ENCODE measurements at regions of chr19 and their contacts with region 1.

Region 1: DNA sequence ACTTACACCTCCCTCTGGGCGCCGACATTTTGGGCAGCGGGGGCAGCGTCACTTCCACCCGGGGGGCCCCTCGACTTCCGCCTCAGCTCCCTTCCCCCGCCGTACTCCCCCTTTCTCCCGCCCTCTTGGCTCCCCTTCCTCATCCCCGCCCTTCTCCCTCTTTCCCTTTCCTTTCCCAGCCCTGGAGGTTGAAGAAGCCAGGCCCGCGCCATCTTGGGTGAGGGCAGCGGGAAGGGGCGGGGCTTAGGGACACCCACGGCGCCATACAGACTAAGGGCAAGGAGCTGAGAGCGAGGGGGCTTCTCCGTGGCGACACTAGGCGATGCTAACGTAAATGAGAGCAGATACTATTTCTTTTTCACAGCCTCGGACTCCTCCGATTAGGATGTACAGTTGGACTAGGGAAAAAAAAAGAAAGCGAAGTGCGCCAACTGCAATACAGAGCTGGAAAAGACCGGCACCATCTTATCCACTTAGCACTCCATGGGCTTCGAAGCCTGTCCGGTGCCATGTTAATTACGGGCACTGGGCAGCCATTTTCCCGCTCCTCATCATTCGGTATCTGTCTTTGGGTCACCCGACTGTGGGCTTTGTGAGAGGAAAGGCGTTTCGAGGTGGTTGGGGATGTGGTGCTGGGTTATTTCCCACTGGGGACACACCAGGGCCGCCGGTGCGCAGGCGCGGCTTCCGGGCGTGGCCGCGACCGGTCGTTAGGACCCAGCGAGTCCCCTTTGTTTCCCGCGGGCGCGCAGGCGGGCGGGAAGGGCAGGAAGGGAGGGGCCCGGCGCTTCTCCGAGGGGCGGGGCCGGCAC is at the start of gene FIZ1:
- DNase-seq: peak; percentile 98
- ATAC-seq: peak; percentile 79
- H3K4me3 Mint-ChIP-seq: peak within 1 kb of the TSS; percentile 89
- H3K27ac Mint-ChIP-seq: peak within 1 kb of the TSS; percentile 99
- H3K4me1 Mint-ChIP-seq: peaks cover 31% of the 10 kb centered on the region
- H3K27me3 Mint-ChIP-seq: no peaks in the 10 kb centered on the region
- total RNA-seq, gene FIZ1: 13.6 to 14.7 TPM

Region 2: GRCh38 chr19:55014717-55015116 is 585.0 kb before region 1 on chr19:
- CTCF ChIA-PET with region 1: no interaction called
- POLR2A ChIA-PET with region 1: interaction called, 12 read pairs
- intact Hi-C with region 1: no loop called
- DNase-seq: peak; percentile 40
- ATAC-seq: peak; percentile 93
- H3K4me3 Mint-ChIP-seq: peak overlapping the region; percentile 63
- H3K27ac Mint-ChIP-seq: peak overlapping the region; percentile 34
- H3K4me1 Mint-ChIP-seq: no peaks in the 10 kb centered on the region
- H3K27me3 Mint-ChIP-seq: no peaks in the 10 kb centered on the region

Region 3: GRCh38 chr19:55279770-55280643 is 319.7 kb before region 1 on chr19 and contains the start of gene HSPBP1:
- CTCF ChIA-PET with region 1: no interaction called
- POLR2A ChIA-PET with region 1: no interaction called
- intact Hi-C with region 1: loop called in 1 of 2 experiments (anchors 1 kb)
- DNase-seq: peak; percentile 98
- ATAC-seq: peak; percentile 92
- H3K4me3 Mint-ChIP-seq: peak within 1 kb of the TSS; percentile 100
- H3K27ac Mint-ChIP-seq: peak within 1 kb of the TSS; percentile 98
- H3K4me1 Mint-ChIP-seq: peaks cover 24% of the 10 kb centered on the region
- H3K27me3 Mint-ChIP-seq: no peaks in the 10 kb centered on the region
- total RNA-seq, gene HSPBP1: 41.1 to 45.2 TPM

Region 4: DNA sequence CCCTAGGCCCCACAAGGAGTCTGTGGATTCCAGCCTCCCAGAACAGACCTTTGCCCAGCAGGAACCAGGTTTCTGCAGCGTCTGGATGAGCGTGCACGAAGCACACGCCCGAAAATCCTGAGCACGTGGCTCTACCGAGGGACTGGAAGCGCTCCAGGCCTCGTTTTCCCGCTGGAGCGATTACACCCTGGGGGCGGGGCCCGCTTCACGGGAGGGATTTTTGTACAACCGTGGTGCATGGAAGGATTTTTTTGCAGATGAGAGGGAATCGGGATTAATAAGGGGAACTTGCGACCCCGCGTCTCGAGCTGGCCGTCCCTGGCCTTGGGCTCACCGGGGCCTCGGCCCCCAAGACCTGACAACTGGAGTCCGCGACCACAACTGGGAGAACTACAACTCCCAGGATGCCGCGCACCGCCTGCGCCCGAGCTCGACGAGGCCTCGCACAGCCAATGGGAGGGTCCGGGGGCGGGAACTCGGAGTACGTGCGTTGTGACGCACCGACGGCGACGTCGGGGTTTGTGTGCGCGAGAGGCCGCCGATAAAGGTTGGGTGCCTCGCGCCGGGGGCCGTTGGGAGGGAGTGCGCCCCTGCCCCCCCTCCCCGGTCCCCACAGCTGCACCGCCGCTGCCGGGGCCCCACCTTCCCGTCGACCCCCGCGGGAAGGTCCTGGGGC is 123.4 kb before region 1 on chr19 and contains the start of gene ZNF628:
- CTCF ChIA-PET with region 1: interaction called, 3 read pairs
- POLR2A ChIA-PET with region 1: no interaction called
- intact Hi-C with region 1: loop called in 1 of 2 experiments (anchors 1 kb)
- DNase-seq: peak; percentile 99
- ATAC-seq: peak; percentile 96
- H3K4me3 Mint-ChIP-seq: peak within 1 kb of the TSS; percentile 84
- H3K27ac Mint-ChIP-seq: peak within 1 kb of the TSS; percentile 88
- H3K4me1 Mint-ChIP-seq: peaks cover 32% of the 10 kb centered on the region
- H3K27me3 Mint-ChIP-seq: no peaks in the 10 kb centered on the region
- total RNA-seq, gene ZNF628: 5.6 to 6.8 TPM

Region 5: DNA sequence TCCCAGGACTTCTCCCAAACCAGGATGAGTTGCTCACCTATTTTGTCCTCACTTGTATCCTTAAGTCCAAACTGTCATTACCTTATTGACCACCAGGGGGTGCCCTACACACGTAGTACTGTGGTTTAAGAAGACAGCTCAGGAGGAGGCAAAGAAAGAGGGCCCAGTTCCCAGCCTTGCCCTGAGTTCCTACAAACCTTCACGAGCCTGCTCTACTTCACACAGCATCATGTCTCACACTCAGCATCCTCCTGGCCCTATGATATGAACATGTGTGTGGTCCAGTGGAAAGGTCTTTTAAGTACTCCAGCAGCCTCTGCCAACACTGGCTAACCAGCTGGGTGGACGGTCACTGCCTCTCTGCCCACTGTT is 32.8 kb after region 1 on chr19:
- CTCF ChIA-PET with region 1: interaction called, 33 read pairs
- POLR2A ChIA-PET with region 1: no interaction called
- intact Hi-C with region 1: loop called in 1 of 2 experiments (anchors 2 kb)
- DNase-seq: peak; percentile 93
- ATAC-seq: peak; percentile 43
- H3K4me3 Mint-ChIP-seq: peak overlapping the region; percentile 30
- H3K27ac Mint-ChIP-seq: peak overlapping the region; percentile 37
- H3K4me1 Mint-ChIP-seq: peaks cover 37% of the 10 kb centered on the region
- H3K27me3 Mint-ChIP-seq: no peaks in the 10 kb centered on the region

Region 6: GRCh38 chr19:56140583-56141416 is 541.1 kb after region 1 on chr19 and contains the start of gene ZNF444:
- CTCF ChIA-PET with region 1: no interaction called
- POLR2A ChIA-PET with region 1: no interaction called
- intact Hi-C with region 1: loop called in 1 of 2 experiments (anchors 1 kb)
- DNase-seq: peak; percentile 99
- ATAC-seq: peak; percentile 90
- H3K4me3 Mint-ChIP-seq: peak within 1 kb of the TSS; percentile 89
- H3K27ac Mint-ChIP-seq: peak within 1 kb of the TSS; percentile 94
- H3K4me1 Mint-ChIP-seq: peaks cover 31% of the 10 kb centered on the region
- H3K27me3 Mint-ChIP-seq: no peaks in the 10 kb centered on the region
- total RNA-seq, gene ZNF444: 29.2 to 32.2 TPM